ENCODE measurements at regions of chr6 and their contacts with region 1.

Region 1: DNA sequence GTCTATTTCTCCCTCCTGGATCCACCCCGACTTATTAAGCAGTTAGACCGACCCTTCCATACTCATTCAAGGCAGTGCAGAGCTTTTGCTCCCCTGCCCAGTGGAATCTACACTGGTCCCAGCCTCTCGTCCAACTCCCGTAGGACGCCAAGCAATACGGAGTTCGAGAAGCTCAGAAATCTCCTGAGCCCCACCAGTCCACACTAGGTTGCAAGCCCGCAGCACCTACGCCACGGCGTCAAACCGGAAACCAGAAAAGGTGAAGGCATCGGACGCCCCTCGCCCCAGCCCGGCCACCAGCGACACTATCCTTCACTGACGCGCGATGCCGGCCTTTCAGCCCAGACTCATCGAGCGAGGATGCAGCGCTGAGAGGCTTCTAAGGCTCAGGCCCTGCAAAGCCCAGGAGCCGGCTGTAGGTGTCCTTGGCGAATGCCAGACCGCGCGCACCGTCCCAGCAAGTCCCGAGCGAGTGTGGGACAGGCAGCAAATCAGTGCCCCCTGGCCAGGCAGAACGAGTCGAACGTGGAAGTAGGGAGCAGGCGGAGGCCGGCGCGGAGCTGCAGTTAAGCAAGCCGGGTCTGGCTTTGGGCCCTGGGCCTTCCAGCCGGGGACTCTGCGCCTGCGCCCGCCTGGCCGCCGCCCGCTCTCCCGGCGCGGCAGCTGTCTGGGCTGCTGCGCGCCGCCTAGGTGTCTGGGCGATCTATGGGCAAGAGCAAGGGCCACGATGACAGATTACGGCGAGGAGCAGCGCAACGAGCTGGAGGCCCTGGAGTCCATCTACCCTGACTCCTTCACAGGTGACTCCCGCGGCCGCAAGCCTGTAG is at the start of gene RWDD1:
- DNase-seq: peak; percentile 99
- ATAC-seq: peak; percentile 98 to 99 (median 98)
- H3K4me3 ChIP-seq: peak within 1 kb of the TSS; percentile 66 to 95 (median 76)
- H3K27ac ChIP-seq: peak within 1 kb of the TSS; percentile 55 to 96 (median 90)
- H3K4me1 ChIP-seq: peaks cover 2 to 49% (median 32%) of the 10 kb centered on the region in 9 donors
- H3K27me3 ChIP-seq: no peaks in the 10 kb centered on the region
- CTCF ChIP-seq: peak in 4 of 9 donors; percentile 4 to 17 (median 12)
- total RNA-seq, gene RWDD1: 40.8 to 79.7 (median 49.7) TPM

Region 2: DNA sequence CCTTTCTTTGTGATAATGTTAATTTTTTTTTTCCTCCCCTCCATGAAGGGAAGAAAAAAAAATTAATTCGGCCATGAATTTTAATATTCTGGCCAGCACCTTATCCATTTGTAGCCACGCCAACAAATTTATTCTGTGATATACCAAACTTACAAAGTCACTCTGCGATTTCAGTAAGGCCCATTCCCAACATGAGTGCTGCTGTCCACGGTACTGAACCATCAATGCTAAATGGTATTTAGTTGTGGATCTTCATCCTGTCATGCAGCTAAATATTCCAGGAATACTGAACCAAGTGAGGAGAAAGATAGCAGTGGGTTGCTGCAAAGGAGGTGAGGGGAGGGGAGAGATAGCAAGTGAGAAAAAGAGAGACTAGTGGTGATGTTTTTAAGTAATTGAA is 25.7 kb after region 1 on chr6:
- intact Hi-C with region 1: no loop called
- DNase-seq: no peak
- ATAC-seq: no peak
- H3K4me3 ChIP-seq: no peak overlapping the region
- H3K27ac ChIP-seq: no peak overlapping the region
- H3K4me1 ChIP-seq: no peaks in the 10 kb centered on the region
- H3K27me3 ChIP-seq: no peaks in the 10 kb centered on the region
- CTCF ChIP-seq: no peak

Region 3: DNA sequence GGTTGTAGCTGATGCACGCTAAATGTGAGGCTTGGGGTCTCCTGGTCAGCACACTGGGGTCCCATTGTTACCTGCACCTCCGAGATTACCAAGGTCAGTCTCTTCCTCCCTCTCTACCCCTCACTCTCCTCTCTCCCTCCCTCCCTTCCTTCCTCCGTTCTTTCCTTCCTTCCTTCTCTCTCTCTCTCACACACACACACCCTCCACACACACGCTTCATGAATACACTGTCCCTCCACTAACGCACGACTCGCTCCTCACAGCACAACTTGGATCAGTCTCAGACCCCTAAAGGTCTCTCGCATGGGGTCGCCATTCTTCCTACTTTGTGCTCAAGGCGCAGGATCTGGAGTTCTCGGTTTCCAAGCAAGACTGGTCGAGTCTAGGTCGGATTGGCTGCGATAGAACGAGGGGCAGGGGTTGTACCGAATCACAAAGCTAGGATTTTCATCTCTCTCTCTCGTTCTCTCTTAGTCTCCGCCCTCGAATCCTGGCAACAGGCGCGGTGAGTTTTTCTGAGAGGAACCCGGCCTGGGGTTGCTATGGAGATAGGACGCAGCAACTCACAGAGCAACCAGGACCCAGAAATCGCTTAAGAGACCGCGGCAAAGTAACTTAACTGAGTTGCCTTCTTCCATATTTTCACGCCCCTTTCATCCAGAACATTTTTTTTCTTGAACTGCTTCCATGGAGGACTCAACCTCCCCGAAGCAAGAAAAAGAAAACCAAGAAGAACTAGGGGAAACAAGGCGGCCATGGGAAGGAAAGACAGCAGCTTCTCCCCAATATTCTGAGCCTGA is 45.1 kb after region 1 on chr6 and contains the start of gene RSPH4A:
- intact Hi-C with region 1: loop called in 1 of 10 experiments (anchors 2 kb)
- DNase-seq: peak; percentile 79 to 94
- ATAC-seq: peak; percentile 97 to 100 (median 99)
- H3K4me3 ChIP-seq: peak within 1 kb of the TSS; percentile 5 to 68 (median 56)
- H3K27ac ChIP-seq: peak within 1 kb of the TSS in 1 of 10 donors; percentile 9
- H3K4me1 ChIP-seq: peaks cover 0 to 11% (median 7%) of the 10 kb centered on the region in 9 donors
- H3K27me3 ChIP-seq: peaks cover 0 to 5% (median 0%) of the 10 kb centered on the region in 7 donors
- CTCF ChIP-seq: peak in 2 of 9 donors; percentile 27 to 37
- total RNA-seq, gene RSPH4A: 0.11 to 0.55 (median 0.22) TPM in 8 of 10 donors, not detected in the others

Region 4: GRCh38 chr6:116667623-116668022 is 96.6 kb after region 1 on chr6:
- intact Hi-C with region 1: loop called in 1 of 10 experiments (anchors 10 kb)
- DNase-seq: no peak
- ATAC-seq: no peak
- H3K4me3 ChIP-seq: peak overlapping the region; percentile 48 to 94 (median 78)
- H3K27ac ChIP-seq: peak overlapping the region in 5 of 10 donors; percentile 30 to 85 (median 68)
- H3K4me1 ChIP-seq: peaks cover 3 to 38% (median 29%) of the 10 kb centered on the region in 9 donors
- H3K27me3 ChIP-seq: no peaks in the 10 kb centered on the region
- CTCF ChIP-seq: no peak